Activated CD8-positive, alpha-beta T cell treated with anti-CD3 and anti-CD28 coated beads, Interleukin-2, amount 10 ng/mL, durations not matched to agents 7 days and 5 days (primary cell): ENCODE measurements at regions of chr10 and their contacts with region 1.

Region 1: DNA sequence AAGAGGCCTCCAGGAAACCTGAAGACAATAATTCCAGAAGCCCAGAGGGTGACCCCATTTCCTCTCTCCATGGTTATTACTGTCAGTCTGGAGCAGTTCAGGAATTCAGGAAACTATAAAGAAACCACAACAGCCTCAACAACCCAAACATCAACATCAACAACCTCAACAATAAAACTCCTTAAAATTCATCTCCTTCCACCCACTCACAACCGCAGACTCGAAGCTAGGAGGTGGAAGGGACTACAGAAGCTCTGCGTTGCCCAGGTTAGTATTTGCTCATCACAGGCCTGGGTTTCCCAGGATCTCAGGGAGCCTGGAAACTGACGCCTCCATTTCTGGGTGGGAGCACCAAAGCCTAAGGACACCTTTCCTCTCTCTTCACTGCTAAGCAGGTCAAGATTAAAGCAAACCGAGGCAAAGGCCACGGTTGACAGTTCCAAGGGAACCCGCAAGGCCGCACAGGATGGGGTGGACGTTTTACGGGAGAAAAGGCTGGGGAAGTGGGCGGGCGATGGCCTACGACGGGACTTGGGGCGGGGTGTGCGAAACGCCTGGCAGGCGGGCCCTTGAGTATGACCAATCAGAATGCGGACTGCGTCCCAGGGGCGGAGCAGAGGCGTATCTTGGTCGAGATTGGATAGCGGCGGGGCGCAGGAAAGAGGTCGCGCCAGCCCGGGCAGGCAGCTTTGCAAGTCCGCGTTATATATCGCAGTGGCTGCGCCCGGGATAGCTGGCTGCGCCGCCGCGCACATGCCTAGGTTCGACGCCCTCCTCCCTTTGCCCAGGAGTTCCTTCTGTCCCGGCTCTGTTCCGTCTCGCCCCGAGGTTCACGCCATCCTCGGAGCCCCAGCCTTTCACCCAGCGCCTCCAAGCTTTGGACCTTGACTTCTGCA is at the start of gene ELOVL3:
- DNase-seq: peak; percentile 91
- ATAC-seq: peak; percentile 96
- H3K4me3 Mint-ChIP-seq: peak within 1 kb of the TSS; percentile 32
- H3K27ac Mint-ChIP-seq: no peak within 1 kb of the TSS
- H3K4me1 Mint-ChIP-seq: peaks cover 24% of the 10 kb centered on the region
- H3K27me3 Mint-ChIP-seq: peaks cover 56% of the 10 kb centered on the region
- total RNA-seq, gene ELOVL3: not detected

Region 2: GRCh38 chr10:102185811-102186527 is 39.9 kb before region 1 on chr10:
- CTCF ChIA-PET with region 1: interaction called, 21 read pairs
- POLR2A ChIA-PET with region 1: interaction called, 3 read pairs
- DNase-seq: no peak
- ATAC-seq: no peak
- H3K4me3 Mint-ChIP-seq: no peak overlapping the region
- H3K27ac Mint-ChIP-seq: no peak overlapping the region
- H3K4me1 Mint-ChIP-seq: peaks cover 14% of the 10 kb centered on the region
- H3K27me3 Mint-ChIP-seq: peaks cover 3% of the 10 kb centered on the region

Region 3: GRCh38 chr10:102310361-102311024 is 84.6 kb after region 1 on chr10:
- CTCF ChIA-PET with region 1: interaction called, 40 read pairs
- POLR2A ChIA-PET with region 1: no interaction called
- DNase-seq: no peak
- ATAC-seq: no peak
- H3K4me3 Mint-ChIP-seq: no peak overlapping the region
- H3K27ac Mint-ChIP-seq: no peak overlapping the region
- H3K4me1 Mint-ChIP-seq: peaks cover 33% of the 10 kb centered on the region
- H3K27me3 Mint-ChIP-seq: no peaks in the 10 kb centered on the region

Region 4: GRCh38 chr10:102352066-102352715 is 126.3 kb after region 1 on chr10:
- CTCF ChIA-PET with region 1: interaction called, 742 read pairs
- POLR2A ChIA-PET with region 1: no interaction called
- DNase-seq: peak; percentile 81
- ATAC-seq: peak; percentile 78
- H3K4me3 Mint-ChIP-seq: no peak overlapping the region
- H3K27ac Mint-ChIP-seq: no peak overlapping the region
- H3K4me1 Mint-ChIP-seq: no peaks in the 10 kb centered on the region
- H3K27me3 Mint-ChIP-seq: no peaks in the 10 kb centered on the region

Region 5: GRCh38 chr10:102394079-102394800 is 168.3 kb after region 1 on chr10:
- CTCF ChIA-PET with region 1: interaction called, 156 read pairs
- POLR2A ChIA-PET with region 1: interaction called, 6 read pairs
- DNase-seq: peak; percentile 98
- ATAC-seq: peak; percentile 89
- H3K4me3 Mint-ChIP-seq: peak overlapping the region; percentile 85
- H3K27ac Mint-ChIP-seq: peak overlapping the region; percentile 95
- H3K4me1 Mint-ChIP-seq: peaks cover 35% of the 10 kb centered on the region
- H3K27me3 Mint-ChIP-seq: no peaks in the 10 kb centered on the region

Region 6: DNA sequence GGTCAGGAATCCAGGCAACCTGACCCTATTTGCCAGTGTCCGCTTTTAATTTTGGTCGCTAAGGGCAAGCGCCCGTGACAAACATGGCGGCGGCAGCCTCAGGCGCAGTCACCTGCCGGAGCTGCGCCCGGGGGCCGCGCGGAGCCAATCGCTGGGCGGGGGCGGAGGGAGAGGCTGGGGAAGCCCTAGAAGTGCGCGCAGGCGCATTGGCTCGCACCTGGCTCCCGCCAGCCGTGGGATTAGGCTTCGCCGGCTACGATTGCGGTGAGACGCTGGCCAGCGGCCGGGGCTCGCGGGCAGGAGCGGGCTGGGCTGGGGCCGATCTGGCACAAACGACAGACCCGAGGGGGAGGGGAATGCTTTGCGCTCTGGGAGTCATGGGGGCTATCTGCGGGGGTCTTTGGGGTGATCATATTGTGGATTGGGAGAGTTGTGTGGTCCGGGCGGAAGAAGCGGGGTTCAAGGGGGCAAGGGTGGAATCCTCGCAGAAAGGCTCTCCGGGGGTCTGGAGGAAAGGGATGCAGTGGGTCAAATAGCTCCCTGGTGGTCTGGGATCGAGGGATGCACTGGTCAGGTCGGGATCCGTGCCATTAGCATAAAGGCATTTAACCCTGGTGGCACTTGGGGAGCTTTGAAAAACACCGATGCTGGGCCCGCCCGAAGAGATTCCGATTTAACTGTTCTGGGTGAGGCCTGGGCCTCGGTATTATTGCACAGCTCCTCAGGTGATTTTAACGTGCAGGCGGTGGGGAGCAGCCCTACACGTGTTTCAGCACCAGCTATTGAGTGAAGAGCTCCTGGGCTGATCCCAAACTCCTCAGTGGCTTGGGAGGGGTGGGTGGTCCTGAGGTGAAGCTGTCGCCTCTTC is 235.5 kb after region 1 on chr10:
- CTCF ChIA-PET with region 1: interaction called, 11 read pairs
- POLR2A ChIA-PET with region 1: no interaction called
- DNase-seq: peak; percentile 94
- ATAC-seq: peak; percentile 97
- H3K4me3 Mint-ChIP-seq: peak overlapping the region; percentile 90
- H3K27ac Mint-ChIP-seq: peak overlapping the region; percentile 79
- H3K4me1 Mint-ChIP-seq: peaks cover 32% of the 10 kb centered on the region
- H3K27me3 Mint-ChIP-seq: no peaks in the 10 kb centered on the region